ENCODE measurements at regions of chrX and their contacts with region 1.

Region 1: DNA sequence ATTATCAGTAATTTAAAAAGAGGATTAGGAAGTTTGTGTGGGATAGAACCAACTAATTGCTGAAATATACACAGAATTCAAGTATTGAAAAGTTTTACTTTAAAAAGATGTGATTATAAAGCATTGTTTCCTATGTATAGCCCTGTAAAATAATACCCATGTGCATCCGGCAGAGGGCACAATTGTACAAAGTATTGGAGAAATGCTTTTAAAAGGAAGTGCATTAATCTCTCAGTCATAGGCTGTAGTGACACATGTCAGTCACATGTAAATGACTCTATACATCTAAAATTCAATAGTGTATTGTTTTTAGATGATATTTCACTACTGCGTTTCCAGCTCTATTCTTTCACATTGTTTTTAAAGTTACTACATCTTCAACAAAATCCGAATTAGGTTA is 9.7 kb upstream of the GEMIN8 start:
- DNase-seq: peak; percentile 75
- H3K4me3 Mint-ChIP-seq: no peak overlapping the region
- H3K27ac Mint-ChIP-seq: no peak overlapping the region
- H3K4me1 Mint-ChIP-seq: no peaks in the 10 kb centered on the region
- H3K27me3 Mint-ChIP-seq: peaks cover 81% of the 10 kb centered on the region
- CTCF ChIP-seq: peak; percentile 81

Region 2: DNA sequence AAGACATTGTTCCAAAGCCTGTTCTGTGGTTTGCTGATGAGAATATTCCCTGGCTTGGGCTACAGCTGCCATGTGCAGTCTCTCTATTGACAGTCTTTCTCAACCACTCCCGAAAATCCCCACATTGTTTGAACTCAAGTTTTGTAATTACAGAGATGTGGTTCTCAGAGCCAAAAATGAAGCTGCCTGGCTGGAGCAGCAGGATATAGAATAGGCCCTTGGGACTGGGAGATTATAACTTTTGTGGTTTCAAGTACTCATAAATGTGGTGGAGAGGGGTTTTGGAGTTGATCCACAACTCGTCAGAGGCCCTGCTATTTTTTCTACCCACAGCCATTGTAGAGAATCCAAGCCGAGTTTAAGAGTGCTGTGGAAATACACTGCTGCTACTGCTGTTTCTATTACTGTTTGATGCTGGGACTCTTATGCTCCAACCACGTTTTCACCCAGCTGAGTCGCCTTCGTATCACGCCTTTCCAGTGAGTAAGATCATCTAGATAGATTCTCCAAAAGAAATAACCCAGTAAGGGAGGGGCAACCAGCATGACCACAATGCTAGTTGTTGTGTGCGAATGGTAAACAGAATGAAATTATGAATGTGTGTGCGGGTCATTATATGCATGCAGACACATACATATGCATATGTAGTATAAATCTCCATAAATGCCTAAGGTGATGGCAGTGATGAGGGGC is 662.3 kb before region 1 on chrX:
- CTCF ChIA-PET with region 1: no interaction called
- POLR2A ChIA-PET with region 1: no interaction called
- intact Hi-C with region 1: no loop called
- DNase-seq: peak; percentile 86
- H3K4me3 Mint-ChIP-seq: no peak overlapping the region
- H3K27ac Mint-ChIP-seq: peak overlapping the region; percentile 76
- H3K4me1 Mint-ChIP-seq: peaks cover 15% of the 10 kb centered on the region
- H3K27me3 Mint-ChIP-seq: peaks cover 3% of the 10 kb centered on the region
- CTCF ChIP-seq: no peak

Region 3: DNA sequence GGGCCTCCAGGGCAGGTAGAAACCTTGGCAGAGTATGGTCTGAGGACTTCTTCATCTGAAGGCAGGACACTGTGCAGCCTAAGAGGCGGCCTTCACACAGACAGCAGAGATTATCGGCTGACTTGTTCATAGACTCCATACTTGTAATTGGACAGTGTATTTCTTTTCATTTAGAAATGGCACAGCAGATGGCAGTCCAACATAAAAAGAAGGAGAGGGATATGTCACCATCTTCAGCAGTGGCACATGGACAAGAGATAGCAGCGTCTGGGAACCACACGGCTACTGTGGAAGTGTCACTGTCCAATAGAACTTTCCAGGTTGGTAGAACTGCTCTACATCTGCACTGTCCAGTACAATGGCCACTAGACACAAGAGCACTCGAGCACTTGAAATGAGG is 12.1 kb after region 1 on chrX:
- CTCF ChIA-PET with region 1: interaction called, 13 read pairs
- POLR2A ChIA-PET with region 1: no interaction called
- intact Hi-C with region 1: no loop called
- DNase-seq: no peak
- H3K4me3 Mint-ChIP-seq: no peak overlapping the region
- H3K27ac Mint-ChIP-seq: no peak overlapping the region
- H3K4me1 Mint-ChIP-seq: no peaks in the 10 kb centered on the region
- H3K27me3 Mint-ChIP-seq: peaks cover 96% of the 10 kb centered on the region
- CTCF ChIP-seq: no peak

Region 4: DNA sequence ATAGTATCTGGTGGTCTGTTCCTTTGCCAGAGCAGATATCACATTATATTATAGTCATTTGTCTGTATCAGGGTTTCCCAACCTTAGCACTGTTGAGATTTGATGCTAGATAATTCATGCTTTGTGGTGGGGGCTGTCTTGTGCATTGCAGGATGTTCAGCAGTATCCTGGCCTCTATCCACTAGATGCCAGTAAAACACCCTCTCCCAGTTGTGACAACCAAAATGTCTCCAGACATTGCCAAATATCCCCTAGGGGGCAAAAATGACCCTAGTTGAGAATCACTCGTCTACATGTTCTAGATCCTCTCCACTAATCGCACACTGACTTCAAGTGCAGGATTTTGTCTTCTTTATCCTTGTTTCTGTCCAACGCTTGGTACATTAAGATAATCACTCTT is 672.8 kb after region 1 on chrX:
- CTCF ChIA-PET with region 1: no interaction called
- POLR2A ChIA-PET with region 1: no interaction called
- intact Hi-C with region 1: loop called (anchors 5 kb)
- DNase-seq: no peak
- H3K4me3 Mint-ChIP-seq: no peak overlapping the region
- H3K27ac Mint-ChIP-seq: no peak overlapping the region
- H3K4me1 Mint-ChIP-seq: no peaks in the 10 kb centered on the region
- H3K27me3 Mint-ChIP-seq: peaks cover 23% of the 10 kb centered on the region
- CTCF ChIP-seq: no peak